ENCODE measurements at regions of chr3 and their contacts with region 1.

Region 1: DNA sequence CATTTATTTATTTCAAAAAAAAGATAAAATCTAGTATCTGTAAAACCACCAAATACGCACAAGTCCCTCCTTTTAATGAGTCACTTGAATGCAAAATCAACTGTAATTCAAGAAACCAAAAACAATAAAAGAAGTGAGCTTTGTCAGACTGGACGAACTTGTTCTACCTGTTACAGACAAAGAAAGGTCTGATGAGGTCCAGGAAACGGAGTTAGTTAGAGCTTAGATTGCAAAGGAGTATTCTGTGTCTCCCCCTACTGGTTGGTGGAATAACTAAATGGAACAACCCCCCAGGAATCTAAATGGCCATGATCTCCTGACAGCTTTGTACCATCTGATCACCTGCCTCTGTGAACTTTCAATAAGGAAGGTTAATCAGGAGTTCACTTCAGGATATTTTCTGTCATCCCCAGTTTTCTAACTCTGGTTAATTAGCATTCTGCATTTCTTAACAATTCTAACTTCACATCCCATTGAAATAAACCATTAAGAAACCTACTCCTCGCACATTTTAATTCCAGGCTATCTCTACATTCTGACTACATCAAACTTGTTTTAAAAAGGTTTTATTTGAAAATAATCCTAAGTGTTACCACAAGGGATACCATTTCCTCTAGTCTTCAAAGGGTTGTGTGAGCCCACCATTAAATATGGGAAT is 333.0 kb upstream of the SATB1 start:
- DNase-seq: peak; percentile 8
- CTCF ChIP-seq: peak; percentile 60

Region 2: DNA sequence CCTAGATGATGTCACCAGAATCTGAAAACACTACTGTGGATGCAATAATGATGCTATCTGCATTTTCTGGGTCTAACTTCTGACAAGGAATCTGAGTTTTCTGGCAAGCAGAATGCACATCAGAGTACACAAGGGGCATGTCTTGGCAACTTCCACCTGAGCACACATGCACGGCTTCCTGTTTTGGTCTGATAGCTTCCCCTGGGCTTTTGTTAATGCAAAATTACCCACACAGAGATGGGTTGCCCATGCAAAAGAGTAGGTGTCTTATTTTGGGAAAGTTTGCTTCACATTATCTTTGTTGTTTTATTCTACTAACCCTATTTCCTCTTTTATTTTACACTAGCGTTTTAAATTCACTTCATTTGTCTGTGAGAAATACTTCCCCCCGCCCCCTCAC is 258.9 kb before region 1 on chr3:
- in situ Hi-C with region 1: no loop called
- DNase-seq: no peak
- CTCF ChIP-seq: no peak

Region 3: DNA sequence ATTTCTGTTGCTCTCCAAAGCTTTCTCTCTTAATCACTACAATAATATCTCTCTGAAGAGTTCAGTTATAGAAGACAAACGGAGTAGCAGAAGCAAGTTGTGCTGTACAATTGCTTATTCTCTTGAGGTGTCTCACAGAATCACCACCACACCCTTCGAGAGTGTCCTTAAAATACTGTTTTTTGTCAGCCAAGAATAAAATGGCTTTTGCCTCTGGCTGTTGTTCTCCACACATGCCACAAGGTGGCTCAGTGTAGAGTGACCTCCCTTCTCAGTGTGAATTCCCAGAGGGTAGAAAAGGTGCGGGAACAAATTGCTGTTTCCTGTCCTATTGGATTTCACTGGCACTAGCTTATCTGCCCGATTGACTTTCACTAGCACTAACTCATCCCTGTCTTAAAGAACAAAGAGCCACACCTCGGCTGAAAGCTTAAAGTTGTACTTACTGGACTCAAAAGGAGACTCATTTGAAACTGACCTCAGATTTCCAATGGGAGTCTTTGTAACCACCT is 198.8 kb before region 1 on chr3:
- in situ Hi-C with region 1: loop called (anchors 10 kb)
- DNase-seq: peak; percentile 7
- CTCF ChIP-seq: peak; percentile 80

Measured in GM13976 (cell line).